A549 (cell line): ENCODE measurements at regions of chr10 and their contacts with region 1.

Region 1: GRCh38 chr10:88835096-88835909 is 16.3 kb downstream of the ANKRD22 start:
- DNase-seq: peak; percentile 62 to 87
- ATAC-seq: peak; percentile 98 to 99
- H3K4me3 ChIP-seq: no peak overlapping the region
- H3K27ac ChIP-seq: peak overlapping the region in 1 of 2 experiments; percentile 25; a peak in 1 of 6 replicates
- H3K4me1 ChIP-seq: peaks cover 13% of the 10 kb centered on the region
- CTCF ChIP-seq: peak; percentile 96
- EP300 ChIP-seq: no peak
- POLR2A ChIP-seq: no peak
- RAD21 ChIP-seq: peak; percentile 99

Region 2: DNA sequence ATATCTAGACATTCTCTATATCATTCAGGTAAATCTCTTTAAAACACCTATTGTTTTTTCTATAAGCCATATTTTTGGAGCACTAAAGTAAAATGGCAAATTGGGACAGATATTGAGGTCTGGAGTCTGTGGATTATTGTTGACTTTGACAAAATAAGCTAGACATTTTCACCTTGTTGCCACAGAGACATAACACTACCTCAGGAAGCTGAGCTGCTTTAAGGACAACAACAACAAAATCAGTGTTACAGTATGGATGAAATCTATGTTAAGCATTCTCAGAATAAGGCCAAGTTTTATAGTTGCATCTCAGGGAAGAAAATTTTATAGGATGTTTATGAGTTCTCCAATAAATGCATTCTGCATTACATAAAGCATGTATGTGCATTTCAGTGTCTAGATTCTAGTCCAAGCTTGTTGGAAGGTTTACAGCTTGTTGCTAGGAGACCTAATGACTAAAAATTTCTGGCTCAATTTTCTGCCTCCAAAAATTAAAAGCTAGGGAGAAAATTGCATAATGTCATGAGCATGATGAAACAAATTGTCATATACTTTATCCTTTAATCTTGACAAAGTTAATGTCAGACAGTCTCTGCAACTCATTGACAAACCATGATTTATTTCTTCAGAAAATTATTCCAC is 14.4 kb before region 1 on chr10:
- CTCF ChIA-PET with region 1: interaction called, 79 read pairs
- POLR2A ChIA-PET with region 1: no interaction called
- DNase-seq: no peak
- ATAC-seq: no peak
- H3K4me3 ChIP-seq: no peak overlapping the region
- H3K27ac ChIP-seq: no peak overlapping the region
- H3K4me1 ChIP-seq: peaks cover 7% of the 10 kb centered on the region; the same call in 2 of the 3 replicates
- CTCF ChIP-seq: no peak
- EP300 ChIP-seq: no peak
- POLR2A ChIP-seq: no peak
- RAD21 ChIP-seq: no peak

Region 3: DNA sequence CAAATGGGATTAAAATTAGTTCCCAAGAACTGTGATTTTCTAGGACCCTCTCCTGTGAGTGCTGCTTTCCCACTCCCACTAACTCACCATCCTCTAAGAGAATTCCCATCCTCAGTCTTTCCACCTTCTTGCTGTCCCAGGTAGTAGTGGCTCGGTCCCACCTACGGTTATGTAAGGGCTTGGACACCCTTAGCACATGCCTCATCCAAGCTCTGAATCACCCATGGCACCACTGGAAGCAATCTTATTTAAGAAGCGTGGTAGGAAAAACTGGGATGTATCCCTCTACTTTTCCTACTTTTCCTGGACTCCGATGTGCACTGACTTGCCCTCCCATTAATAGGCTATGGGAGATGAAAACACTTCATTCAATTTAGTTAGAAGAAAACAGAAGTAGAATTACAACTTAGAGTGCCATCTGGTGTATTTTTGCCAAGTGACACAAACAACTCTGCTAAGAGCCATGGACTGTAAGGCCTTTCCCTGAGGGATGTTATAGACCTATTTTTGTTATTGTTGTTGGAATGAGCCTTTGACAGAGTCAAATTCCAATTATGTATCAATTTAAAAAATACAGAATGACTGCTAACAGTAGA is 30.1 kb after region 1 on chr10:
- CTCF ChIA-PET with region 1: interaction called, 70 read pairs
- POLR2A ChIA-PET with region 1: no interaction called
- DNase-seq: peak in 1 of 2 experiments; percentile 17
- ATAC-seq: peak; percentile 55 to 70
- H3K4me3 ChIP-seq: no peak overlapping the region
- H3K27ac ChIP-seq: no peak overlapping the region
- H3K4me1 ChIP-seq: no peaks in the 10 kb centered on the region
- CTCF ChIP-seq: peak; percentile 39; the same call in 2 of the 3 replicates
- EP300 ChIP-seq: no peak
- POLR2A ChIP-seq: no peak
- RAD21 ChIP-seq: peak; percentile 27 to 50; a peak in 4 of 5 replicates

Region 4: DNA sequence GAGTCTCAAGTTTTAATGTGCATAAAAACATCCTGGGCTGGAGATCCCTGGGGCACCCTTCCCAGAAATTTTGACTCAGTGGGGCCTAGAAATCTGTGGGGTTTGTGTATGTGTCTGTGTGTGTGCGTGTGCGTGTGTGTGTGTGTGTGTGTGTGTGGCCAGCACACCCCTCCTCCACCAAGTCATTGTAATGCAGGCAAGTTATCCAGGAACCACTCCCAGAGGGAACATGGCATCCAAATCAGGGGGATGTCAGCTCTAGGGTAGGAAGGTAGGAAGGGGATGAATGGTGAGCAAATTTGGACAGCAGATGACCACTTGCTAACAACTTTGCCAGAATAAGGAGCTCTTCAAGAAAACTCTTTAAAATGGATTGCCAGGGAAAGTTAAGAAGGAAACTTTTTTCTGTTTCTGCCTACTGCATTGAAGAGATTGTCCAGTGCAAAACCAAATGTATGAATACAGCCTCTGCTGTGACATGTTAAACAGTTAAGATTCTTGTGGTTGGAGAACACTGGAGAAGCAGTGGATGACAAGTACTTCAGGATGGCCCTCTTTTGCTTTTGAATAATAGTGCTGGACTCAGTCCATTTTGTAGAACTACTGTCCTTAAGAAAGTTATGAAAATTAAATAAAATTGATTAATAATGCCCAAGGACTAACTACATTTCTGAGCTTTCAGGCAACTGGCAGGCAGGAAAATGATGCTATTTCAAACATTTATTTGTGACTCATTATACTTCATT is 57.1 kb after region 1 on chr10:
- CTCF ChIA-PET with region 1: interaction called, 53 read pairs
- POLR2A ChIA-PET with region 1: no interaction called
- DNase-seq: no peak
- ATAC-seq: no peak
- H3K4me3 ChIP-seq: no peak overlapping the region
- H3K27ac ChIP-seq: peak overlapping the region; percentile 40 to 80; a peak in 5 of 6 replicates
- H3K4me1 ChIP-seq: peaks cover 100% of the 10 kb centered on the region
- CTCF ChIP-seq: no peak
- EP300 ChIP-seq: no peak
- POLR2A ChIP-seq: no peak
- RAD21 ChIP-seq: no peak

Region 5: DNA sequence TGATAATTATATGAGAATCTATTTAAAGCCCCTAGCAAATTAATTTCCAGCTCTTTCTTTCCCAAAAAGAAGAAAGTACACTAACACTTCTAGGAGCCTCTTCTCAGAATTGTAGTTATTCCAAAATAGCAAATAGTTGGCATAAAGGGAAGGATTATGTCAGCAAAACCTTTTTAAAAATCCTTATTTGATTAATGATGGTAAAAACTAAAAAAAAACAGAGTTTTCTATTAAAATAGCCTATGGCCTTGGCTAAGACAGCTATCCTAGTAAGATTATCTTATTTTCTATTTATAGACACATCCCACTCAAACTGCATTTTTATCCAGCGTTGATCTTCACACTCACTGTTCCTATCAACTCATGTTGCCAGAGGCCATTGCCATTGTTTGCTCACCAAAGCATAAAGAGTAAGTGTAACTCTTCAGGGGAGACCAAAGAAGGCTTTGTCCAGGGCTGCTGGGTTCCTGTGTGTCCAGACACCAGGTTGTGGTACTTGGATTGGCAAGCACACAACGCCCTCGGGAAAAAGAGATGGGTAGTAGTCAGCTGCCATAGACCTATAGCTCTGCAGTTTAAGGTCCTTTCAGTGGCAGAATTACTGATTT is 85.8 kb after region 1 on chr10:
- CTCF ChIA-PET with region 1: interaction called, 25 read pairs
- POLR2A ChIA-PET with region 1: no interaction called
- DNase-seq: no peak
- ATAC-seq: no peak
- H3K4me3 ChIP-seq: no peak overlapping the region
- H3K27ac ChIP-seq: no peak overlapping the region
- H3K4me1 ChIP-seq: no peaks in the 10 kb centered on the region
- CTCF ChIP-seq: no peak
- EP300 ChIP-seq: no peak
- POLR2A ChIP-seq: no peak
- RAD21 ChIP-seq: no peak

Region 6: GRCh38 chr10:88944813-88945212 is 109.5 kb after region 1 on chr10:
- CTCF ChIA-PET with region 1: interaction called, 36 read pairs
- POLR2A ChIA-PET with region 1: no interaction called
- DNase-seq: no peak
- ATAC-seq: no peak
- H3K4me3 ChIP-seq: no peak overlapping the region
- H3K27ac ChIP-seq: no peak overlapping the region
- H3K4me1 ChIP-seq: no peaks in the 10 kb centered on the region
- CTCF ChIP-seq: no peak
- EP300 ChIP-seq: no peak
- POLR2A ChIP-seq: no peak
- RAD21 ChIP-seq: no peak

Region 7: DNA sequence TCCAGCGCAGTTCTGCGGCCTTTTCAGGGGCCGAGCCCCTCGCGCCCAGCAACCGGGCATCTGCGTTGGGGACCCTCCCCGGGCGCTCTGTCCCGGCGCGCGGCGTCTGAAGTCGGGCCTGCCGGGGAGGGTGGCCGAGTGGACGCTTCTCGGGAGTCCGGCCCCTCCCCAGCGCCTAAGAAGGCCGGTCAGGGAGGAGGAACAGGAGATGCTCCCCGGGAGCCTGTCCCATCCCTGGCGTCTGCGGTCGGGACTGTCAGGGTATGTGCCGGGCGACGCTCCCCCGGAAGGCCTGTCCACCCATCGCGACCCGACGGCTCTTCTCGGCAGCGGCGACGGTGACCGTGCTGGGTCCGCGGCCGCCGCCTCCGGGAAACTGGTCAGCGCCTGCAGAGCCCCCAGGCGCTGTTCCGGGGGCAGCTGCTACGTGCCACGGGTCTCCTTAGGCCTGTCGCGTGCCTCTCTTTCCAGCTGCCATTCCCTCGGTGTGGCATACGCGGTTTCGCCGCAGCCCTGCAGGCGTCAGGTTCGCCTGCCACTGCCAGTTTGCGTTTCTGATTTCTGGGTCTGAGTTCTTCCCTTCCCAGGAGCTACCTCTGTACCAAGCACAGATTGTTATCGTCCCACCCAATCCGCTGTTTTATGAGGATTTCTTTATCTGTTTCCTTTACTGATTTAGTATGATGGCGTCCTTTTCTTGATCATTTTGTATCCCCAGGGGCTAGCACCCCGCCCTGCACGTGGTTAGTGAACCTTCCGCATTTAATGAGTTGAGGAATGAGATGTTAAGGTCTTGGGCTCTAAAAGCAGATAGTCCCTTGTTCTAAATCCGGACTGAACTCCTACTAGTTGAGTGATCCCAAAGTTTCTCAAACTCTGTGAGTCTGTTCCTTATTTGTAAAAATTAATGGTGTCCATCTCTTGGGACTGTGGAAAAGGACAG is 579.8 kb after region 1 on chr10:
- CTCF ChIA-PET with region 1: no interaction called
- POLR2A ChIA-PET with region 1: no interaction called
- DNase-seq: peak; percentile 55 to 59
- ATAC-seq: peak; percentile 89 to 93
- H3K4me3 ChIP-seq: peak overlapping the region; percentile 68
- H3K27ac ChIP-seq: peak overlapping the region; percentile 84 to 97
- H3K4me1 ChIP-seq: peaks cover 12% of the 10 kb centered on the region; the same call in 1 of the 3 replicates
- CTCF ChIP-seq: no peak
- EP300 ChIP-seq: no peak
- POLR2A ChIP-seq: no peak; the same call in 1 of the 2 replicates
- RAD21 ChIP-seq: 0 out of 5 replicates have a peak, but pooled peaks of 1 of the 2 experiments have one; percentile 7